ENCODE measurements at regions of chr5 and their contacts with region 1.

Region 1: GRCh38 chr5:139392678-139393496 is 2.0 kb downstream of the PROB1 start:
- DNase-seq: peak; percentile 94
- ATAC-seq: peak; percentile 69
- H3K4me3 Mint-ChIP-seq: peak overlapping the region; percentile 96
- H3K27ac Mint-ChIP-seq: peak overlapping the region; percentile 93
- H3K4me1 Mint-ChIP-seq: peaks cover 43% of the 10 kb centered on the region
- H3K27me3 Mint-ChIP-seq: no peaks in the 10 kb centered on the region
- CTCF ChIP-seq: peak; percentile 97

Region 2: DNA sequence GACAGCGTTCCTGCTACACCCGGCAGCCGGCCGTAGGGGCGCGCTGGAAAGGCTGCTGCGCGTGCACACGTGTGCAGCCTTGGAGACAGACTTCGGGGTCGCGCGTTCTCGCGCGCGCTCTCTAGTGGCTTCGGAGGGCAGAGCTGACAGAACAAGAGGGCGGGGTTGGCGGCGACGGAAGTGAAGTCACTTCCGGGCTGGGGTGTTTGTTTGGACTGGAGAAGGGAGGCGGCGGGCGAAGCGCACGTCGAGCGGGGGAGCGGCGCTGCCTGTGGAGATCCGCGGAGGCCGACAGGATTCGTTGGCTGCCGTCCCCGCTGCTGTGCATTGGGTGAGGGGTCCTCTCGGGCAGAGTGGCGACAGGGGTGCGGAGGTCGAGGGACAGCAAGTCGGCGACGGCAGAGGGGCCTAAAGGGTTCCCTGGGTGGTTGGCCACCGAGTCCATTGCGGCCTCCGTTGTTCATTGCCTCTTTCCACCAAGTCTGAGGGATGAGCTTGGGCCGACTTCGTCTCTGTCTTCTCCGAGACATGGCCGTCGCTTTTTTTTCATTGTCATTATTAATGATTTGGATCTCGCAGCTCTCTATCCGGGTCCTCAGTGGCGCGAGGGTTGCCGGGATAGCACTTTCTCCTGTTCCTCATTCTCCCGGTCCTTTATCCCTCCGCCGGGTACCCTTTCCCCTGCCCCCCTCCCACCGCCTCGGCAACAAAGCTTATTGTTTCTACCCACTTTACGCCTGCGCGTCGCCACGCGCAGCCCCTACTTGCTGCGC is 51.1 kb before region 1 on chr5 and contains the start of gene PAIP2:
- CTCF ChIA-PET with region 1: interaction called, 15 read pairs
- POLR2A ChIA-PET with region 1: interaction called, 49 read pairs
- intact Hi-C with region 1: loop called (anchors 5 kb)
- DNase-seq: peak; percentile 99
- ATAC-seq: peak; percentile 90
- H3K4me3 Mint-ChIP-seq: peak within 1 kb of the TSS; percentile 89
- H3K27ac Mint-ChIP-seq: peak within 1 kb of the TSS; percentile 95
- H3K4me1 Mint-ChIP-seq: peaks cover 39% of the 10 kb centered on the region
- H3K27me3 Mint-ChIP-seq: no peaks in the 10 kb centered on the region
- CTCF ChIP-seq: peak; percentile 70
- total RNA-seq, gene PAIP2: 110 to 113 TPM

Region 3: DNA sequence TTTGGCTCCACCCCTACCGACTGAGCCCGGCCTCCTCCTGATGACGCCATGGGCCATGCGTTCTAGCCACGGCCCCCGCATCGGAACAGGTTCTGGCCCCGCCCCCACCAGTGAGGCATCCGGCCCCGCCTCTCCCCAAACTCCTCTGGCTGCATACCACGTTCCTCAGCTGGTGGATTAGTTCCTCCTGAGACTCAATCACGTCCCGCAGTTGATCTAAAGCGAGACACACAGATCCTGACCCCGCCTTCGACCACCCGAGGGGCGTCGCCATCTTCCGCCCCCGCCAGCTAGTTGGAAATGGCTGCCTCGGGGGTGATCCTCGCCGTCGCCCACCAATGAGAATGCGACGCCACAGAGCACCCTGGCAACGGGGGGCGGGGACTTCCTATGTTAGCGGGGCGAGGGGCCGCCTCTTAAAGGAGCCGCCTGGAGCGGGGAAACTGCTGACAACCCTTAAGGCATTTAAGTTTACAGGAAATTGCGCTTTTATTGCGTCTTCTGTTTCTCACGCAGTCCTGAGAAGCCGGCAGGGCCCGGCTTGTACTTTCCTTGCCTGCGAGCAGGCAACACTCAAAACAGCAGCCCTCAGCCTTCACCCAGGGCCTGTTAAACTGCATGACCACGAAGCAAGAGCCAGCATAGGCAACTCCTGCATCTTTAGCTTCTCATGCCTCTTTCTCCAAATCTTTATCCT is 11.0 kb after region 1 on chr5 and contains the start of gene SPATA24:
- CTCF ChIA-PET with region 1: interaction called, 34 read pairs
- POLR2A ChIA-PET with region 1: interaction called, 21 read pairs
- intact Hi-C with region 1: no loop called
- DNase-seq: peak; percentile 100
- ATAC-seq: peak; percentile 89
- H3K4me3 Mint-ChIP-seq: peak within 1 kb of the TSS; percentile 85
- H3K27ac Mint-ChIP-seq: peak within 1 kb of the TSS; percentile 99
- H3K4me1 Mint-ChIP-seq: peaks cover 39% of the 10 kb centered on the region
- H3K27me3 Mint-ChIP-seq: no peaks in the 10 kb centered on the region
- CTCF ChIP-seq: no peak
- total RNA-seq, gene SPATA24: 4.3 to 4.4 TPM

Region 4: DNA sequence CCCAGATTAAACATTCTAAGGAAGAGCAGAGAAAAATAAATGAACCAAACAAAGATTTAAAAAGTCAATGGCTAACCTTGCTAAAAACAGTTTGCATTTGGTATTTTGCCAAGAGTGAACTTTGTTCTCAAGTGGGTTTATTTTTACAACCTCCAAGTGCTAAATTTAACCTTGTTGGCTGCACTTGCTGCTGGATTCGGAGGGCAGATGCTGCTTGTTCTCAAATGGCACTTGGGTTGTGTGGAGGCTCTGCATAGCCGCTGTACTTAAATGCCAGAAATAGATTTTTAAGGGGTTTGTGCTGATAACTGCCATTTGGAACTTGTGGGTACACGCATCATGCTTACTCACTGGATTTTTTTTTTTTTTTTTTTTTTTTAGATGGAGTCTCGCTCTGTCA is 24.3 kb after region 1 on chr5:
- CTCF ChIA-PET with region 1: interaction called, 7 read pairs
- POLR2A ChIA-PET with region 1: interaction called, 10 read pairs
- intact Hi-C with region 1: no loop called
- DNase-seq: no peak
- ATAC-seq: no peak
- H3K4me3 Mint-ChIP-seq: no peak overlapping the region
- H3K27ac Mint-ChIP-seq: peak overlapping the region; percentile 96
- H3K4me1 Mint-ChIP-seq: peaks cover 46% of the 10 kb centered on the region
- H3K27me3 Mint-ChIP-seq: no peaks in the 10 kb centered on the region
- CTCF ChIP-seq: no peak